Ovary (tissue), 10 donors: ENCODE measurements at regions of chr14 and their contacts with region 1.

Region 1: DNA sequence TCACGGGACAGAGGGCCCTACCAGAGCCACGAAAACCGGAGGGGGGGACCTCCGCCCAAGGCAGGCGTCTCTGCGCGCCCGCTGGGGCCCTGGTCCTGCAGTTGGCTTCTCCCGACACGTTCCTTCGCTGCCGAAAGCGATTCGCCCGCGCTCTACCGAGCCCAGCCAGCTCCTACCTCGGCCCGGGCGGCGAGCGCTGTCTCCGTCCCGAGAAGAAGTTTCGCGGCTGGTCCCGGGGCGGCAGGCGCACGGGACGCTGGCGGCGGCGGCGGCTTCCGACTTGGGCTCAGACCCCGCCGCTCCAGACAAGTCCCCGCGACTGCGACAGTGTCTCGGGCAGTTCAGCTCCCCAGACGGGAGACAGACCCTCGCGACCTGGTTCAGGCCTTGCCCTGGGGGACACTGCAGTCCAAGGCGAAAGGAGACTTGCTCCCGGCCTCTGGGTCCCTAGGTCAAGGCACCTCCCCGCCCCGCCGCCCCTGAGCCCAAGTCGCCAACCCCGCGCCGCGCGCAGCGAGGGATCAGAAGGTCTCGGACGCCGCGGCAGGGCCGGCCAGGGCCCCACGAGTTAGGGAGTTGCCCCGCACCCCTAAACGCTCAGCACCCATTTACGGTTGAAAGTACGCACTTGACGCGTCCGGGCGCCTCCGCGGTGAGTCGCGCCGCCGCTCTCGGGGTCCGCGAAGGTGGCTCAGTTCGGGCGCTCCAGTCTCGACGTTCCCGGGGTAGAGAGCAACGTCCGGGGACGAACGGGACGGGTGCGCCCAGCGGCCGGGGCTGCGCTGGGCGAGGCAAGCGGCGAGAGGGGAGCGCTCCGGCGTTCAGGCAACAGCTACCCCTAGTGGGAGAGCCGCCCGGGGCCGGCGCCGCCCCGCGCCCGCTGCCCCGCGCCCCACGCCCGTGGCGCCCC is 1.4 kb upstream of the DIO3 start:
- DNase-seq: peak; percentile 72 to 85 (median 79)
- H3K4me3 ChIP-seq: peak overlapping the region; percentile 75
- H3K27ac ChIP-seq: peak overlapping the region; percentile 94 to 96
- H3K4me1 ChIP-seq: peaks cover 13% of the 10 kb centered on the region
- H3K27me3 ChIP-seq: no peaks in the 10 kb centered on the region
- CTCF ChIP-seq: peak; percentile 19 to 61 (median 49)
- EP300 ChIP-seq: no peak
- POLR2A ChIP-seq: peak; percentile 10

Region 2: DNA sequence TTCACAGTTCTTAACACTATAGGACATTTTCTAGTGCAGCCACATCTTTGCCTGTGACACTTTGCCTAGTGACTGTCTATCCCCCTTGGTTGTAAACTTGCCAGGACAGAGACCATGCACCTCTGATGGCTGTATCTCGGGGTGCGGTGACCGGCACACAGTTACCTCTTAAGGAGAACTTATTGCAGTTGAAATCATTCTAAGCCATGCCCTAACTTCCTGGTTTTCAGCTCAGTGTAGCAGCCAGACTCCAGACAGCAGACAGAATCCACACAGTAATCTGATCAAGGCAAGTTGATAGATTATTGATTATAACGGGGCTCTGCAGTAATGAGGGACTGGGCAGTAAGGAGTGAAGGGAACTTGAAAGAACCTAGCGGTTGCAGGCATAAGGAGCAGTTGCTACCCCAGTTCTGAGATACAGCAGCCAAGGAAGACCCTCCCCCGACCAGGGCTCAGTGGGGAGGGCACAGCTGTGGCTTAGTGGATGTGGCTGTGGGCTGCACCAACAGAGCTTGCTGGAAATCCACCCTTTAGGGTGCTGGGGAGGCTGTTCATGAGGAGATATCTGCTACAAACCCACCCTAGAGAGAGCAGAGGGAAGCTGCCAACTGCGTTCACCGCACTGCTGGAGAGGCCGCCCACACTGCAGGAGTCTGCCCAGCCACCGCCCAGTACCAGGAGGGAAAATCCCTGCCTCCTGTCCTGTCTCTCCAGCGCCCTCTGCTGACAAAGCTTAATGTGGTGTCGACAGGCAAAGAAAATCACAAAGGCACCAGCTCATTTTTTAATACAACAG is 914.5 kb before region 1 on chr14:
- intact Hi-C with region 1: no loop called
- DNase-seq: peak; percentile 74 to 86 (median 82)
- H3K4me3 ChIP-seq: no peak overlapping the region
- H3K27ac ChIP-seq: no peak overlapping the region
- H3K4me1 ChIP-seq: no peaks in the 10 kb centered on the region
- H3K27me3 ChIP-seq: no peaks in the 10 kb centered on the region
- CTCF ChIP-seq: peak; percentile 15 to 68 (median 65)
- EP300 ChIP-seq: no peak
- POLR2A ChIP-seq: no peak

Region 3: GRCh38 chr14:100662879-100663760 is 896.8 kb before region 1 on chr14:
- intact Hi-C with region 1: loop called in 1 of 4 experiments (anchors 10 kb)
- DNase-seq: peak; percentile 72 to 88 (median 83)
- H3K4me3 ChIP-seq: no peak overlapping the region
- H3K27ac ChIP-seq: peak overlapping the region in 1 of 2 donors; percentile 83
- H3K4me1 ChIP-seq: peaks cover 14% of the 10 kb centered on the region
- H3K27me3 ChIP-seq: no peaks in the 10 kb centered on the region
- CTCF ChIP-seq: peak; percentile 92 to 93 (median 92)
- EP300 ChIP-seq: no peak
- POLR2A ChIP-seq: no peak

Region 4: GRCh38 chr14:101072945-101073597 is 486.8 kb before region 1 on chr14:
- intact Hi-C with region 1: loop called in 2 of 4 experiments (anchors 10 kb)
- DNase-seq: peak; percentile 50 to 73 (median 66)
- H3K4me3 ChIP-seq: no peak overlapping the region
- H3K27ac ChIP-seq: no peak overlapping the region
- H3K4me1 ChIP-seq: no peaks in the 10 kb centered on the region
- H3K27me3 ChIP-seq: no peaks in the 10 kb centered on the region
- CTCF ChIP-seq: no peak
- EP300 ChIP-seq: no peak
- POLR2A ChIP-seq: no peak

Region 5: DNA sequence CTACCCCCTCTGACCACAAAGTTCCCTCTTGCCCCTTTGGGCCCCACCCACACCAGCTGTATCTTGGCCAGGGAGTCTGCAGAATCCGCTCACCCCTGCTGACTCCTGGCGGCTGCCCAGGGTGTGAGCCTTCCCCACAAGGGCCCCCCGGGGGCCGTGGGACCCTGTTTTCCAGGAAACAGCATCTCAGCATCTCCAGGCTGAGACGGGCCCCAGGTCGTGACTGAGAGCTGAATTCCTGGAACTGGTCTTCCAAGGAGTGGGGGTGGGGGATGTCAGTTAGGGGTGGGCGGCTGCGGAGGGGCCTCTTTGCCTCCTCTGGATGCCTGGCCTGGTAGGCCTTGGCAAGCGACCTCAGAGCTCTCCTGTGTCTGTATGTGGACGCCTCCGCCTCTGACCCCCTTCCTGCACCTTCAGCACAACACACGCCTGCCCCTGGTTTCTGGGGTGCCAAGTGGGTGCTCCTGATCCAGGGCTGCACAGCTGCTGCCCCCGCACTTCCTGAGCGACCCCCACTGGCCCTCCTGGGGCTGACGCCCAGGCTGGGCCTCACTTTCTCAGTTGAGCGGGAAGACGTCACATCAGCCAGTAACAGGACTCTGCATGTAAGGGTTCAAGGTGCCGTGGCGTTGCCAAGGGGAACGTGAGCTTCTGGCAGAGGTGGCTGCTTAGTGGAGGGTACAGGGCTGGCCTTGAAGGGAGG is 334.3 kb before region 1 on chr14:
- intact Hi-C with region 1: loop called in 1 of 4 experiments (anchors 5 kb)
- DNase-seq: peak in 1 of 5 donors; percentile 57
- H3K4me3 ChIP-seq: no peak overlapping the region
- H3K27ac ChIP-seq: no peak overlapping the region
- H3K4me1 ChIP-seq: peaks cover 3% of the 10 kb centered on the region
- H3K27me3 ChIP-seq: no peaks in the 10 kb centered on the region
- CTCF ChIP-seq: no peak
- EP300 ChIP-seq: no peak
- POLR2A ChIP-seq: no peak

Region 6: DNA sequence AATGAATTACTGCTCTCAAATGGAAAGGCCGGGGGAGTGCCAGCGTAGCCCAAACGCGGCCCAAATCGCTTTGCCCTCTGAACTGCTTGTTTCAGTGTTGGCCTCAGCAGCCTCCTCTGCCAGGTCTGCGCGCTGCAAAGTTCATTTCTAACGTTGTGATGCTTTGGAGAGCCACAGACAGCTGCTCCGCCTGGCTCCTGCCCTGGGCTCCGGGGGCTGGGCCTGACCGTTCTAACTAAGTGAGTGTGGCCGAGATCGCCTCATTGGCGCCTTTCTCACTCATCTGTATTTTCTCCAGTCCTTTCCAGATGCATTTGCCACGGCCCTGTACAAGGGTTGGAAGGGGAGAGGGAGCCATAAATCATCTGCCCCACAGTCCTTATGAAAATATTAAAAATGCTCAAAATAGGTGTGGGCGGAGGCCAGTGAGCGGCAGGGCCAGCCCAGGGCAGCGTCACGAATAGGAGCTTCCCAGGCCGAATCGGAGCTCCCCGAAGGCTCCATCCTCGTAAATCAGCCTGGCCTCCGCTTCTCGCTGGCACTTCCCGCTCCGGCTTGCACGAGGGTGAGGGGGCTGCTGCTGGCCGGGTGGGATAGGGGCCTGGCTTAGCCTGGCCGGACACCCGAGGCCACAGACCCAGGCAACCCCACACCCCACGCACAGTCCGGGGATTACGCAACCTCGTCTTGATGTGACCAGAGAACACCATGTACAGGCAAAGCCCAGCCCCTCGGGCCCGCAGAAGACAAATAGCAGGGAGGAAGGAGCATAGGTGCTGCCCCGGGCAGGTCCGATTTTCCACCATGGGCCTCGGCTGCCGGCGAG is 195.2 kb before region 1 on chr14:
- intact Hi-C with region 1: loop called in 3 of 4 experiments (anchors 2 to 10 kb)
- DNase-seq: peak; percentile 87 to 97 (median 94)
- H3K4me3 ChIP-seq: no peak overlapping the region
- H3K27ac ChIP-seq: peak overlapping the region; percentile 67 to 94
- H3K4me1 ChIP-seq: peaks cover 47% of the 10 kb centered on the region
- H3K27me3 ChIP-seq: no peaks in the 10 kb centered on the region
- CTCF ChIP-seq: peak in 1 of 3 donors; percentile 7
- EP300 ChIP-seq: peak; percentile 87
- POLR2A ChIP-seq: peak; percentile 52